H1 (cell line): ENCODE measurements at regions of chr7 and their contacts with region 1.

Region 1: DNA sequence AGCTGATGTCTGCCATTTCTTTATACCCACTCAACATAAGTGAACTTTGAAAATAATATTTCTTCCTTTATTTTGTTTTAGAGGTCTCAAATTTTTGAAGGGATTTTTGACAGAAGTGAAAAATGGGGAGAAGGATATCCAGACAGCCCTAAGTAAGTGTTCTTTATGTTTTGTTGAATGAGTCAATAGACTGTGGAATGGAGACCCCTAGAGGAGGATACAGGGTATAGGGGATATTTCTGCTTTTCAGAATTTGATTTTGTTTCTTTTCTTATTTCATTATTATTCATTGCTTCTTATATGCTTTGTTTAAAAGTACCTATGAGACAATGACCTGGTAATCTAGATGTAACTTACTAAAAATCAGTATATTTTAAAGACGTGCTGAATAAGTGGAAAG is 34.4 kb downstream of the PLEKHA8 start:
- DNase-seq: no peak
- H3K4me3 ChIP-seq: no peak overlapping the region
- H3K27ac ChIP-seq: no peak overlapping the region
- H3K4me1 ChIP-seq: no peaks in the 10 kb centered on the region
- H3K27me3 ChIP-seq: no peaks in the 10 kb centered on the region
- CTCF ChIP-seq: peak in 2 of 3 experiments; percentile 41 to 58; a peak in 2 of 4 replicates
- EP300 ChIP-seq: no peak
- POLR2A ChIP-seq: no peak
- RAD21 ChIP-seq: peak; percentile 56 to 67

Region 2: GRCh38 chr7:29754874-29755490 is 307.6 kb before region 1 on chr7:
- CTCF ChIA-PET with region 1: no interaction called
- POLR2A ChIA-PET with region 1: no interaction called
- DNase-seq: no peak
- H3K4me3 ChIP-seq: no peak overlapping the region
- H3K27ac ChIP-seq: no peak overlapping the region
- H3K4me1 ChIP-seq: no peaks in the 10 kb centered on the region
- H3K27me3 ChIP-seq: peaks cover 0 to 1% (median 0%) of the 10 kb centered on the region in 4 experiments; a peak in 1 of 7 replicates
- CTCF ChIP-seq: no peak
- EP300 ChIP-seq: no peak
- POLR2A ChIP-seq: no peak
- RAD21 ChIP-seq: no peak

Region 3: DNA sequence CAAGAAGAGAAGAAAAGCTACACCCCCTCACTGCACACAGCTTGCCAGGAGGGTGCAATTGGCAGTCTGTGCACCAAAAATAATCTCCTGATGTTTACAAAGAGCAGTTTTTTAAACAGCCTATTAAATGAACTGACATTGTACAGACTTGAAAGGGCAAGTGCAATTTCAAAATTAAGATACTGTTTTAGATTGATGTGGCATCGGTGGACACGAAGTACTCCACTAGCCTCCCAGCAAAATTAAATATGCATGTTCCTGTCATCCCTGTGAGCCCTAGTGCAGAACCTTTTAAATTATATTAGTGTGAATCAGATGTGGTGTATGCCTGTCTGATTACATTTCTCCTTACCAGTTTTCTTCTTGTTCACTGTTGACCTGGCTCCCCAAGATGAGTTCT is 168.3 kb before region 1 on chr7:
- CTCF ChIA-PET with region 1: no interaction called
- POLR2A ChIA-PET with region 1: no interaction called
- DNase-seq: no peak
- H3K4me3 ChIP-seq: no peak overlapping the region
- H3K27ac ChIP-seq: no peak overlapping the region
- H3K4me1 ChIP-seq: no peaks in the 10 kb centered on the region; a peak in 1 of 7 replicates
- H3K27me3 ChIP-seq: no peaks in the 10 kb centered on the region
- CTCF ChIP-seq: no peak
- EP300 ChIP-seq: no peak
- POLR2A ChIP-seq: no peak
- RAD21 ChIP-seq: no peak

Region 4: GRCh38 chr7:29946428-29947186 is 116.0 kb before region 1 on chr7:
- CTCF ChIA-PET with region 1: interaction called, 49 read pairs
- POLR2A ChIA-PET with region 1: interaction called, 4 read pairs
- DNase-seq: peak in 1 of 2 experiments; percentile 54
- H3K4me3 ChIP-seq: no peak overlapping the region
- H3K27ac ChIP-seq: no peak overlapping the region
- H3K4me1 ChIP-seq: no peaks in the 10 kb centered on the region
- H3K27me3 ChIP-seq: no peaks in the 10 kb centered on the region
- CTCF ChIP-seq: peak; percentile 71 to 91 (median 77)
- EP300 ChIP-seq: no peak
- POLR2A ChIP-seq: no peak
- RAD21 ChIP-seq: peak; percentile 77 to 83

Region 5: GRCh38 chr7:29976673-29977415 is 85.7 kb before region 1 on chr7:
- CTCF ChIA-PET with region 1: interaction called, 11 read pairs
- POLR2A ChIA-PET with region 1: no interaction called
- DNase-seq: no peak
- H3K4me3 ChIP-seq: no peak overlapping the region
- H3K27ac ChIP-seq: no peak overlapping the region
- H3K4me1 ChIP-seq: no peaks in the 10 kb centered on the region
- H3K27me3 ChIP-seq: no peaks in the 10 kb centered on the region
- CTCF ChIP-seq: no peak
- EP300 ChIP-seq: no peak
- POLR2A ChIP-seq: no peak
- RAD21 ChIP-seq: no peak

Region 6: GRCh38 chr7:30041521-30042269 is 20.9 kb before region 1 on chr7:
- CTCF ChIA-PET with region 1: interaction called, 11 read pairs
- POLR2A ChIA-PET with region 1: no interaction called
- DNase-seq: no peak
- H3K4me3 ChIP-seq: no peak overlapping the region
- H3K27ac ChIP-seq: no peak overlapping the region
- H3K4me1 ChIP-seq: peaks cover 0 to 4% (median 1%) of the 10 kb centered on the region in 4 experiments; a peak in 3 of 7 replicates
- H3K27me3 ChIP-seq: no peaks in the 10 kb centered on the region
- CTCF ChIP-seq: no peak
- EP300 ChIP-seq: no peak
- POLR2A ChIP-seq: no peak
- RAD21 ChIP-seq: no peak

Region 7: DNA sequence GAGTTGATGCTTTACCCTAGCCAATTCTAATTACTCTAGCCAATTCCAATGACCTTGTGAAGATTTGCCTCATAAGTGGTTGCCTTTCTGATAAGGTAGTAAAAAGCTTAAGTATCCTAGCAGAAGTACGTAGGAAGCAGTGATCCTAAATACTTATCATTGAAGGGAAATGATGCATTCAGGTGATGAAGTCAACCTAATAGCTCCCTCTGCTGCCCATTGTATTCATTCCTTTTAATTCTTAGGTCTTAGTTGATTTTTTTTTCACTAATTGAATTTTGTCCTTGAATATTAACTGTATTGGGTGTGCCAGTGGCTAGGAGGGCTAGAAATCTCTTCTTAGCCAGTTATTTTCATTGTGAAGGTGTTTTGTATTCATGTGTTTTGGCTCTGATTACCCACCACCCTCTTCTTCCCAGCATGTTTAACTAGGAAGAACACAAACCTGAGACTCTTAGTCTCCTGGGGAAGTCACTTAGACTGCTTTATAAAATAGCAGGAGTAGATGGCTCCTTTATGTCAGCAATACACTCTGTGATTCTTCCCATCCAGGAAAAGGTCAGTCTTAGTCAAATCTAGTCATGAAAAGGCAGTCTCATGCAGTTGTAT is 11.9 kb after region 1 on chr7:
- CTCF ChIA-PET with region 1: interaction called, 39 read pairs
- POLR2A ChIA-PET with region 1: no interaction called
- DNase-seq: no peak
- H3K4me3 ChIP-seq: no peak overlapping the region
- H3K27ac ChIP-seq: no peak overlapping the region
- H3K4me1 ChIP-seq: no peaks in the 10 kb centered on the region
- H3K27me3 ChIP-seq: no peaks in the 10 kb centered on the region
- CTCF ChIP-seq: peak in 2 of 3 experiments; percentile 21 to 46; a peak in 2 of 4 replicates
- EP300 ChIP-seq: no peak
- POLR2A ChIP-seq: no peak
- RAD21 ChIP-seq: peak; percentile 38 to 44